AG04450 (cell line): ENCODE measurements at regions of chr18 and their contacts with region 1.

Region 1: GRCh38 chr18:46481048-46481846 is 175.8 kb downstream of the LOXHD1 start:
- DNase-seq: peak; percentile 18
- H3K4me3 ChIP-seq: no peak overlapping the region
- H3K27ac ChIP-seq: no peak overlapping the region
- H3K27me3 ChIP-seq: no peaks in the 10 kb centered on the region
- CTCF ChIP-seq: peak; percentile 72

Region 2: DNA sequence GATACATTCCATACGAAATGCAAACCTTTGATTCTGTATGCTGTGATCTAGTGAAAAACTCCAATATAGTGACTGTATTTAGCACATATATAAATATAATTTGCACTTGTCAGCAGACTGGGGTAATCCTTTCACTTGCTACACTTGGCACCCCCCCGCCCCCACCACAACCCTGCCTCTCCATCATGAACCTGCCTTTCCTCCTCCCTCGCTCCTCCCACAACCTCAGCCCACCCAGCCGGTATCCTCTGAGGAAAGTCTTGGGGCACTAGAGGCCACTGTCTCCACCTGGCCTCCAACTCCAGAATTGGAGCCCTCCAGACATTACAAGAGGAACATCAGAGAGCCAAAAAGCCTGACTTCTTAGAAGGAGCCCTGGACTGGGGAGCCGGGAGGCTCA is 20.5 kb before region 1 on chr18:
- CTCF ChIA-PET with region 1: interaction called, 13 read pairs
- POLR2A ChIA-PET with region 1: no interaction called
- DNase-seq: no peak
- H3K4me3 ChIP-seq: no peak overlapping the region
- H3K27ac ChIP-seq: no peak overlapping the region
- H3K27me3 ChIP-seq: no peaks in the 10 kb centered on the region
- CTCF ChIP-seq: no peak

Region 3: DNA sequence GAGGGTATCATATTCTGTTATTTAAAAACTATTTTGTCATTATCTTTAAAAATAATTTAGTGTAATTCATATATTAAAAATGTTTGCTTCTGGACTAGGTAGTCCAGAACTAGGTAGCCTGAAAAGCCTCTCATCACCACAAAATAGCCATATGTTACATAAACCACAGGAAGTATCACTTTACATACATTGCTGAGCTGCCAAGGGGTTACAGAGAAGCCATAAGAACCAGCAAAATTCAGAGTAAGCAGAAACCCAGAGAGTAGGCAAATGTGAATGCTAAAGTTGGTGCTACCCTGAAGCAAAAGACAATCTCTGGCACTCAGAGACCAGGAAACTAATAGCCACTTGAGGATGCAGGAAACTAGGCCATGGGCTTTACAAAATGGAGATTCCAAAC is 114.9 kb after region 1 on chr18:
- CTCF ChIA-PET with region 1: no interaction called
- POLR2A ChIA-PET with region 1: no interaction called
- DNase-seq: no peak
- H3K4me3 ChIP-seq: no peak overlapping the region
- H3K27ac ChIP-seq: no peak overlapping the region
- H3K27me3 ChIP-seq: peaks cover 2% of the 10 kb centered on the region
- CTCF ChIP-seq: no peak